Dorsolateral prefrontal cortex (tissue), 120 donors: ENCODE measurements at regions of chr22 and their contacts with region 1.

Region 1: DNA sequence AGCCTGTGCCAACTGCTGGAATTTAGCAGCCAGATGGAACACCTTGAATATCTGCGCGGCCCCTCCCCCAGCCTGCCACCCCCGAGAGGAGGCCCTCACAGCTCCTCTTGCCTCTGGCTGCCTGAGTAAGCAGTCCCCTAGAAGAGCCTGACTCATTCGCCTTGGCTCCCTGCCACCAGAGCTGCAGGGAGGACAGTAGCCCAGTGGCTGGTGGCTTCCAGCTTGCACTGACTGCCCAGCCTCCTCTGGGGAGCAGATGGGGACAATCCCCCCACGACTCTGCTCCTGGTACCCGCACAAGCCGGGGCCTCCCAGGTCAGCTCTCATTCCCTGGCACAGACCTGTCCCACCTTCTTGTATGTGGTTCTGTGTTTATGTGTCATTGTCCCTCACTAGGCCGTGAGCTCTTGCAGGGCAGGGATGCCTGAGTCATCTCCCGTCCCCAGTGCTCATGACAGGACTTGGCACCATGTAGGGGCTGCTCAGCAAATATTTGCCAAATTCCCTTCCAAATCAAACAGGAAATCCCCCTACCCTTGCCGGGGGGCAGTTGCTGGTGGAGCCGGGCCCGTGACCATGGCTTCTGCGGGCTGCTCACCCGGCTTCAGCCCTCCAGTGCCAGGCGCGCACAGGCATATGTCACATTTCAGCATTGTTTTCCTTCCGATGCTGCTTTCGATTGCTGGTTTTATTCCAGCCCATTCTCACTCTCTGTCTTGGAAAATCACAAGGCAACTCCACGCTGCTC is 43.6 kb downstream of the CACNG2 start:
- DNase-seq: peak; percentile 85 to 99 (median 93)
- H3K4me3 ChIP-seq: peak overlapping the region in 45 of 59 donors; percentile 1 to 53 (median 28)
- H3K27ac ChIP-seq: peak overlapping the region; percentile 38 to 92 (median 82)
- H3K27me3 ChIP-seq: no peaks in the 10 kb centered on the region
- CTCF ChIP-seq: peak in 4 of 56 donors; percentile 5 to 36 (median 16)

Region 2: GRCh38 chr22:36702842-36703215 is 42.9 kb after region 1 on chr22:
- intact Hi-C with region 1: loop called in 1 of 2 experiments (anchors 2 kb)
- DNase-seq: peak in 1 of 10 donors; percentile 35
- H3K4me3 ChIP-seq: peak overlapping the region in 56 of 59 donors; percentile 25 to 72 (median 56)
- H3K27ac ChIP-seq: peak overlapping the region in 48 of 59 donors; percentile 2 to 90 (median 74)
- H3K27me3 ChIP-seq: peaks cover 0 to 66% (median 7%) of the 10 kb centered on the region in 45 donors
- CTCF ChIP-seq: no peak

Region 3: DNA sequence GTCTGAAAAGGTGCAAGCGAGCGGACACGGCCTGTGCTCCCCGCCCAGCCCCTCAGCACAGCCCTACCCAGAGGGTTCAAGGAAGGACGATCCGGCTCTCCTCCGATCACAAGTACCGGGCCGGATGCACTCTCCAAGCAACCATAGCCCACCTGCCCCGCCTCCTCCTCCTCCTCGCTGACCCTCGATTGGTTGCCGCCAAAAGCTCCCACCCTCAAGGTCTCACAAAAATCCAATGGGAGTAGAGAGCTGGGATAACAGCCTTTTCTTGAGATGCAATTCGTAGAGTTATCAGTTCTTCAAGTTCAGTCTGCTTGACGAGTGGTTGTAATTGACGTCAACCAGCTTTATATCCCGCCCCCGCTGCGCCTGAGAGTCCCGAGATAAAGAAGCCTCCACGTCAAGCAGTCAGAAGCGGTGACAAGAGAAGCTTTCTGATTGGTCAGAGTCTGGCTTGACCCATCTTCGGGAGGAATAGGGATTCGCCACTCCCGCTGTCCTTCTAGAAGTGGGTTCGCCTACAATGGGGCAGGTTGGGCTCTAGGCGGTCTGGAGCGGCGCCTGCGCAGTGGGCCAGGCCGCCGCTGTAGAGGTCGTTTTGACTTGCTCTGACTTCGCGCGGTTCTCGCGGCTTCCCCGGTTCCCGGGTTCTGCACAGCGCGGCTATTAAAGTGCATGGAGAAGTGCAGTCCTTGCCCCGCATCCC is 116.2 kb after region 1 on chr22 and contains the start of gene IFT27:
- intact Hi-C with region 1: loop called in 1 of 2 experiments (anchors 5 kb)
- DNase-seq: peak; percentile 94 to 100 (median 100)
- H3K4me3 ChIP-seq: peak within 1 kb of the TSS; percentile 59 to 100 (median 94)
- H3K27ac ChIP-seq: peak within 1 kb of the TSS; percentile 7 to 97 (median 89)
- H3K27me3 ChIP-seq: no peaks in the 10 kb centered on the region
- CTCF ChIP-seq: peak in 21 of 56 donors; percentile 7 to 57 (median 32)
- total RNA-seq, gene IFT27: 29.3 to 64.1 (median 43.9) TPM

Region 4: GRCh38 chr22:36891646-36892045 is 231.7 kb after region 1 on chr22:
- intact Hi-C with region 1: no loop called
- DNase-seq: no peak
- H3K4me3 ChIP-seq: no peak overlapping the region
- H3K27ac ChIP-seq: no peak overlapping the region
- H3K27me3 ChIP-seq: peaks cover 0 to 3% (median 0%) of the 10 kb centered on the region in 45 donors
- CTCF ChIP-seq: no peak